HEK293 (cell line): ENCODE measurements at regions of chr17 and their contacts with region 1.

Region 1: GRCh38 chr17:41648411-41649195 is 24.2 kb upstream of the KRT17 start:
- H3K4me3 ChIP-seq: peak overlapping the region; percentile 42
- H3K27ac ChIP-seq: no peak overlapping the region; the same call in 1 of the 2 replicates
- H3K4me1 ChIP-seq: no peaks in the 10 kb centered on the region
- CTCF ChIP-seq: peak; percentile 93

Region 2: DNA sequence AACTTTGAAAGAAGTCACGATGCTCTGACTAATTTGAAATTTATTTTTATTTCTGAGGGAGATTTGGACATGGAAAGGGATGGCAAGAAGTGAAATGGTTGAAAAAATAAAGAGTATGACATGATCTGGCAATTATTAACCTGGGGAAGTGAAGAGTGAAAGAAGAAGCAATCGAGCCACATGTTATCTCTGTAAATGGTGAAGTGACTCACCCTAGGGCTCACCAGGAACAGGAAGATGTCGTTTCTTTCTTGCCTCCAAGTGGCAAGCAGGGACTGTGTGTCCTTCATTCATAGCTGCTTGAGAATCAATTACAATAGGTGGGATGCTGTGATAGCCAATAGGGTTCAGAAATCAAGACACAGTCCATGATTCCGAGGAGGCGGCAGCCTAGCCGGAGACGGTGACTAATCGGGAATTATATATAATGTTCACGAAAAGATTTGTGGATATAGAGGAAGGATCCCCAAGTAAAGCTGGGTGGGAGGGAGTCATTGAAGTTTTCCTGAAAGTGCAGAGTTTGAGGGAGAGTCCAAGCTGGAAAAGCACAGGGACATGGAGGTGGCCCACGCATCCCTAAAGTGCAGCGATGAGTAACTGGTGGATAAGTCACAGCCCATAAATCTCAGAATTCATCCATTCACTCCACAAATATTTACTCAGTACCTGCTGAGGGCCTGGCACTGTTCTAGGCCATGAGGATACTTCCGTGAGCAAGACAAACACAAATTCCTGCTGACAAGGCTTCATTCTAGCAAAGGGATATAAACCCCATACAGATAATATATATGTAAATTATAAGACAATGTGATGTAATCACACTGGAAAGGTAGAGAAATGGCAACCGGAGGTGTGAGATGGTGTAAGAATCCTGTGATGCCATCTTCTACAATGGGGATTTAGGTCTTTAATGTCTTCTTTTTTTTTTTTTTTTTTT is 745.2 kb before region 1 on chr17:
- CTCF ChIA-PET with region 1: interaction called, 28 read pairs
- POLR2A ChIA-PET with region 1: no interaction called
- H3K4me3 ChIP-seq: no peak overlapping the region
- H3K27ac ChIP-seq: peak overlapping the region; percentile 63
- H3K4me1 ChIP-seq: peaks cover 27% of the 10 kb centered on the region
- CTCF ChIP-seq: no peak

Region 3: DNA sequence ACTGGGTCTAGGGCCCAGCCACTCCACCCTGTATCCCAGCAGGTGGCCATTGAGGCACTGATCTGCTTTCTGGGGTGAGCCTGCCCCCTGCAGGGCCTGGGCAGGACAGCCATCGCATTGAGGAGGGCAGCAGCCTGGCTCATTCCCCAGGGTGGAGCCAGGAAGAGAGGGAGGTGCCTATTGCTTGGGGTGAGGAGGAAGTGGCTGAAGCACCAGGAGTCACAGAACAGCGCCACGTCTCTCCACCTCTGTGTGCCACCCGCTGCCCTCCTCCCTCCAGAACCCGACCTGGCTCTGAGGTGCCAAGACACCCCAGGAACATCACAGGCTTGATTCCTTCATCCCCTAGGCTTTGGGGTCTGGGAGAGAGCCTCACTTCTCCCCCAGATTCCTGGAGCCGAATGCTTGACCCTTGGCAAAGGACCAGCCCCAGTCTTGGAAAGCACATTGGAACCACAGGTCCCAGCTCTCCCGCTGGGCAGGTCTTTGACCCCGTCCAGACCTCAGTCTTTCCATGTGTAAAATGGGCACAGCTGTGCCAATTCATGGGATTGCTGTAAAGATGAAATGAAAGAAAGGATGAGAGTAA is 151.7 kb before region 1 on chr17:
- CTCF ChIA-PET with region 1: interaction called, 23 read pairs
- POLR2A ChIA-PET with region 1: no interaction called
- H3K4me3 ChIP-seq: no peak overlapping the region
- H3K27ac ChIP-seq: no peak overlapping the region
- H3K4me1 ChIP-seq: peaks cover 6% of the 10 kb centered on the region
- CTCF ChIP-seq: peak; percentile 95

Region 4: GRCh38 chr17:41538565-41538991 is 110.0 kb before region 1 on chr17:
- CTCF ChIA-PET with region 1: interaction called, 11 read pairs
- POLR2A ChIA-PET with region 1: interaction called, 3 read pairs
- H3K4me3 ChIP-seq: no peak overlapping the region
- H3K27ac ChIP-seq: no peak overlapping the region
- H3K4me1 ChIP-seq: no peaks in the 10 kb centered on the region
- CTCF ChIP-seq: no peak

Region 5: GRCh38 chr17:41595580-41595979 is 53.0 kb before region 1 on chr17:
- CTCF ChIA-PET with region 1: interaction called, 11 read pairs
- POLR2A ChIA-PET with region 1: no interaction called
- H3K4me3 ChIP-seq: no peak overlapping the region
- H3K27ac ChIP-seq: no peak overlapping the region
- H3K4me1 ChIP-seq: no peaks in the 10 kb centered on the region
- CTCF ChIP-seq: no peak

Region 6: DNA sequence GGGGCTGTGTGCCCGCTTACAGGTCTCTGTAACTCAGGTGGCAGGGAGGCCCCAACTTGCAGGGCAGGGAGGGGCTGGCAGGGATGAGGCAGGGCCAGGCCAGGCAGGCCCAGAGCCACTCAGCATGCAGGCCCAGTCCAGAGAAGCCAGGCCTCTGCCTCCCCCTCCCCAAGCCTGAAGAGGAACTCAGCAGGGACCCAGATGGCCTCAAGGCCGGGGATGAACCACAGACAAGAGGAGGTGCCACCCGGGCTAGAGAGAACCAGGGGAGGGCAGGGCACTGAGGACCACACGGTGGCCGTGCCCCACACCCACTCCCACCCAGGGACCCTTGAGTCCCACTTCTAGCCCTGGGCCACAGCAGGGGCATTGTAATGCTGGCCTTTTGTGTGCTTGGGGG is 10.2 kb after region 1 on chr17:
- CTCF ChIA-PET with region 1: interaction called, 567 read pairs
- POLR2A ChIA-PET with region 1: interaction called, 8 read pairs
- H3K4me3 ChIP-seq: no peak overlapping the region
- H3K27ac ChIP-seq: no peak overlapping the region
- H3K4me1 ChIP-seq: no peaks in the 10 kb centered on the region; the same call in 1 of the 2 replicates
- CTCF ChIP-seq: no peak

Region 7: GRCh38 chr17:41705271-41705991 is 56.8 kb after region 1 on chr17:
- CTCF ChIA-PET with region 1: no interaction called
- POLR2A ChIA-PET with region 1: no interaction called
- H3K4me3 ChIP-seq: no peak overlapping the region
- H3K27ac ChIP-seq: no peak overlapping the region
- H3K4me1 ChIP-seq: no peaks in the 10 kb centered on the region
- CTCF ChIP-seq: no peak